ENCODE measurements at regions of chr2 and their contacts with region 1.

Region 1: DNA sequence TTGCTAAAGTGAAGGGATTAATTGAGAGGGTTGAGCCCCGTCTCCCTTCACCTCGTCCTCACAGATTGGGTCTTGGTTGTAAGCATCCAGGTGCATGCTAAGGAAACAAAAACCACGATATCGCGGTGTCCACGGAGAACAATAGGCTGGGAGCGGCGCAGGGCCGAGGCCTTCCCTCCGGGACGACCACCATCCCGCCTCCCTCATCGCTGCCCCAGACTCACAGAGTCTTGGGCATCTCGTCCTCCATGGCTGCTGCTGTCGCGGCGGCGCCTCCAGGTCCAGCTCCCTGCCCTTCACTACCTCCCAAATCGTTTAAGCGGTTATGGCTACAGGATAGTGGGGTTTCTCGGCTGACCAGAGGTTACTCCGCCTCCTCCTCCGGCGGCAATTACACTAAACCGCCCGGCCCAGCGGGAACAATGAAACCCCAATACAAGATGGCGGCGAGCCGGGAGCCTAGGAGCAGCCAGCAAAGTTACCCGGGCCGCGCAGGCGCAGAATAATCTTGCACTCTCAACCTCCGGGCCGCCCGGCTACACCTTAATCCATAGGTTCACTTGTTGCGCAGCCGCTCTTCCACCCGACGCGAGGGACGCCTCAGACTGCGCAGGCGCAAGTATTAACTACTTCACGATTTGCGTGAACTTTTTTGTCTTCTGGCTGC is at the start of gene TIA1:
- DNase-seq: peak; percentile 99
- H3K4me3 Mint-ChIP-seq: peak within 1 kb of the TSS; percentile 98
- H3K27ac Mint-ChIP-seq: peak within 1 kb of the TSS; percentile 97
- H3K4me1 Mint-ChIP-seq: peaks cover 40% of the 10 kb centered on the region
- H3K27me3 Mint-ChIP-seq: no peaks in the 10 kb centered on the region
- total RNA-seq, gene TIA1: 112 to 116 TPM

Region 2: GRCh38 chr2:70190418-70191243 is 57.7 kb before region 1 on chr2 and contains the start of gene C2orf42:
- CTCF ChIA-PET with region 1: no interaction called
- POLR2A ChIA-PET with region 1: interaction called, 24 read pairs
- DNase-seq: peak; percentile 96
- H3K4me3 Mint-ChIP-seq: peak within 1 kb of the TSS; percentile 82
- H3K27ac Mint-ChIP-seq: peak within 1 kb of the TSS; percentile 87
- H3K4me1 Mint-ChIP-seq: peaks cover 23% of the 10 kb centered on the region
- H3K27me3 Mint-ChIP-seq: no peaks in the 10 kb centered on the region
- total RNA-seq, gene C2orf42: 28.8 to 32.2 TPM

Region 3: GRCh38 chr2:70258532-70258874 is 10.2 kb after region 1 on chr2:
- CTCF ChIA-PET with region 1: interaction called, 12 read pairs
- POLR2A ChIA-PET with region 1: interaction called, 44 read pairs
- DNase-seq: no peak
- H3K4me3 Mint-ChIP-seq: peak overlapping the region; percentile 82
- H3K27ac Mint-ChIP-seq: peak overlapping the region; percentile 58
- H3K4me1 Mint-ChIP-seq: peaks cover 24% of the 10 kb centered on the region
- H3K27me3 Mint-ChIP-seq: no peaks in the 10 kb centered on the region